ENCODE measurements at regions of chr19 and their contacts with region 1.

Region 1: GRCh38 chr19:53571390-53571789 is 33.4 kb downstream of the ZNF331 start:
- DNase-seq: no peak
- H3K4me3 ChIP-seq: no peak overlapping the region
- H3K27ac ChIP-seq: no peak overlapping the region
- H3K4me1 ChIP-seq: no peaks in the 10 kb centered on the region
- H3K27me3 ChIP-seq: no peaks in the 10 kb centered on the region
- CTCF ChIP-seq: no peak

Region 2: GRCh38 chr19:53492153-53492552 is 79.2 kb before region 1 on chr19:
- CTCF ChIA-PET with region 1: no interaction called
- dilution Hi-C with region 1: loop called (anchors 5 kb)
- in situ Hi-C with region 1: no loop called
- intact Hi-C with region 1: no loop called
- DNase-seq: no peak
- H3K4me3 ChIP-seq: no peak overlapping the region
- H3K27ac ChIP-seq: no peak overlapping the region
- H3K4me1 ChIP-seq: no peaks in the 10 kb centered on the region
- H3K27me3 ChIP-seq: no peaks in the 10 kb centered on the region
- CTCF ChIP-seq: no peak

Region 3: GRCh38 chr19:53520550-53521372 is 50.6 kb before region 1 on chr19:
- CTCF ChIA-PET with region 1: no interaction called
- dilution Hi-C with region 1: loop called (anchors 5 kb)
- in situ Hi-C with region 1: no loop called
- intact Hi-C with region 1: no loop called
- DNase-seq: peak; percentile 97
- H3K4me3 ChIP-seq: peak overlapping the region; percentile 81 to 83 (median 82)
- H3K27ac ChIP-seq: peak overlapping the region; percentile 42
- H3K4me1 ChIP-seq: peaks cover 6% of the 10 kb centered on the region
- H3K27me3 ChIP-seq: no peaks in the 10 kb centered on the region
- CTCF ChIP-seq: no peak

Region 4: DNA sequence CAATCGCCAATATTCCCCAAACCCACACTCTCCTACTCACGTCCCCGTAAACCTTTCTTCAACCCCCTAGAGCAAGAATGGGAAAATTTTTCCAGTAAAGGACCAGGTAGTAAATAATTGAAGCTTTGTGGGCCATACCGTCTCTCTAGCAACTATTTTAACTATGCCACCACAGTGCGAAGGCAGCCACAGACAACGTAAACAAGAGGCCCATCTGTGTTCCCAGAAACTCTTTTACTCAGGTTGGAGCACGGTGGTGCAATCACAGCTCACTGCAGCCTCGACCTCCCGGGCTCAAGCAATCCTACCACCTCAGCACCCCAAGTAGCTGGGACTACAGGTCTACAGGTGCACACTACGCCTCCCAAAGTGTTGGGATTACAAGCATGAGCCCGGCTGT is 63.4 kb after region 1 on chr19:
- CTCF ChIA-PET with region 1: no interaction called
- dilution Hi-C with region 1: loop called (anchors 5 kb)
- in situ Hi-C with region 1: no loop called
- intact Hi-C with region 1: no loop called
- DNase-seq: no peak
- H3K4me3 ChIP-seq: no peak overlapping the region
- H3K27ac ChIP-seq: no peak overlapping the region
- H3K4me1 ChIP-seq: no peaks in the 10 kb centered on the region
- H3K27me3 ChIP-seq: no peaks in the 10 kb centered on the region
- CTCF ChIP-seq: no peak

Region 5: DNA sequence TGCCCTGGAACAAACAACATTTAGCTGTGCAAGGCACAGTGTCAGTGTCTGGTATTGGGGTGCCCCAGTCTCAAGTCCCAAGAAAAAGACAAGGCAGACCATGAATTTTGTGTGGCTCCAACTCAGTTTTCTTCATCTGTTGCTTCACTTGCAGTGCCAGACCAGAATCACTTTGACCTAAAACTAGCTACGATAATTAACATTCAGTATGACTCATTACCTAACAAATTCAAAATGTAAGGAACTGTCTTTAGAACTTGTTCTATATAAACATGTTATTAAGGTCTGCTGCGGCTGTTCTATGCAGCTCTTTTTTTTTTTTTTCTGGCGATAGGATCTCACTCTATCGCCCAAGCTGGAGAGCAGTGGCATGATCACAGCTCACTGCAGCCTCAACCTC is 74.1 kb after region 1 on chr19:
- CTCF ChIA-PET with region 1: no interaction called
- dilution Hi-C with region 1: no loop called
- in situ Hi-C with region 1: no loop called
- intact Hi-C with region 1: no loop called
- DNase-seq: no peak
- H3K4me3 ChIP-seq: no peak overlapping the region
- H3K27ac ChIP-seq: no peak overlapping the region
- H3K4me1 ChIP-seq: no peaks in the 10 kb centered on the region
- H3K27me3 ChIP-seq: no peaks in the 10 kb centered on the region
- CTCF ChIP-seq: no peak

Measured in mammary epithelial cell (primary cell).